PC-3 (cell line): ENCODE measurements at regions of chr4 and their contacts with region 1.

Region 1: DNA sequence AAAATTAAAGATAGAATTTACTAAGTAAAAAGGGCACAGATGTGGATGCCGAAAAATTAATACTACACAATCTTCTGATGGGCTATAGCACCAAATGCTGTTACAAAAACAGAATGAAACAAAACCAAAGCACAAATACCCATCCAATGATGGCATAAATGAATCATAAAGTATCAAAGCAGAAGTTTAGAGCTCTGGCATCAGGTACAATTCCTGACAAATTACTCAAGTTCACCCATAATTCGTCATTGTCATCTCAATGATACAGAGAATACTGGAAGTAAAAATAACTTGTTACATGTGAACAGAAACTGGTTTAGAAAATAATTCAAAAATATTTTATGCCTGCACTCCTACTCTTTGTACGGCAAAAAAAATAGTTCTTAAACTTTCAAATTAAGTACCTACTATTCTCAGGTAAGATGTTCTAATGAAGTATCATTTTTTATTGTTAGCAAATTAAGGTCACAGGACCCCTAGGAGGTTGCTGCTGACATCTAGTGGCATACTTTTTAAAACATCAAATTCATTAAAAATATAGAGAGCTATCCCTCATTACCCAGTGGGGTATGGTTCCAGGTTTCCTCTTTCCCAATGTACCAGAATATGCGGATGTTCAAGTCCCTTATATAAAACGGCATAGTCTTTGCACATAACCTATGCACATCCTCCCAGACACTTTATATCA is 126.1 kb downstream of the INPP4B start:
- DNase-seq: peak; percentile 93
- ATAC-seq: peak; percentile 67
- H3K4me3 ChIP-seq: no peak overlapping the region
- H3K27ac ChIP-seq: peak overlapping the region; percentile 76
- H3K4me1 ChIP-seq: peaks cover 33% of the 10 kb centered on the region
- H3K27me3 ChIP-seq: no peaks in the 10 kb centered on the region
- CTCF ChIP-seq: peak; percentile 88

Region 2: DNA sequence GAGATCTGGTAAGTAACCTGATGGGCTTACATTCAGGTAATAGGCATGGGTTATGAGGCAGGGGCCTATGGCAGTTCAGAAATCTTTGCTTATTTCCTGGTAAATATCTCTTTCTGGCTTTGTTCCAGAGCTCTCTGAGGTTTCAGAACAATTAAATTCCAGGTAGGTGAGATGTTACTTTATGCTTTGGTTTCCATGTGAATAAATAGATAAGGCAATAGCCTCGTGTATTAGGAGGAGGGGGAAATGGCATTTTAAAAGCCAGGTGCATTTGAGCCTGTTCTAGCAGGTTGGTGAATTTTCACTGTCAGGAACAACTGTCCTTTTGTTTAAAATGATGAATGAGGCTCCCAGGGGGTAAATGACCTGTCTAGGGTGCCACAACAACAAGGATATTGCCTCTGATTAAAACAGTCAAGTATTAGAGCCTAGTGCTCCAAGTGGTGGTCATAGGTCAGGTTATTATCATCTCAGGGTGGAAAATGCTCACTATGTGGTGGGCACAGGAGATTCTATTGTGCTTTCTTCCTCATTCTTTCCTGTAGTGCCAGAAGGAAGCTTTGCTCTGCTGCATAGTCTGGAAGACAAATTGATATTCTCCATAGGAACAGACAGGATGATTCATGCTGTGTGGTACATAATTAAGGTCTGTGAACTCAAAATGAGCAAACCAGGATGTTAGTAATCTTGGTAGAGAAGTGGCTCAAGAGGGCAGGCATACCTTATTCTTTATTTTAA is 170.1 kb before region 1 on chr4:
- CTCF ChIA-PET with region 1: interaction called, 3 read pairs
- POLR2A ChIA-PET with region 1: no interaction called
- intact Hi-C with region 1: loop called (anchors 1 kb)
- DNase-seq: peak; percentile 96
- ATAC-seq: peak; percentile 92
- H3K4me3 ChIP-seq: peak overlapping the region; percentile 1; the same call in 1 of the 2 replicates
- H3K27ac ChIP-seq: peak overlapping the region; percentile 93
- H3K4me1 ChIP-seq: peaks cover 36% of the 10 kb centered on the region
- H3K27me3 ChIP-seq: no peaks in the 10 kb centered on the region
- CTCF ChIP-seq: peak; percentile 20; the same call in 1 of the 2 replicates

Region 3: GRCh38 chr4:142840516-142841123 is 120.6 kb after region 1 on chr4:
- CTCF ChIA-PET with region 1: no interaction called
- POLR2A ChIA-PET with region 1: no interaction called
- intact Hi-C with region 1: loop called (anchors 1 kb)
- DNase-seq: peak; percentile 79
- ATAC-seq: no peak
- H3K4me3 ChIP-seq: no peak overlapping the region
- H3K27ac ChIP-seq: no peak overlapping the region
- H3K4me1 ChIP-seq: peaks cover 39% of the 10 kb centered on the region
- H3K27me3 ChIP-seq: no peaks in the 10 kb centered on the region
- CTCF ChIP-seq: peak; percentile 86